Adrenal gland (tissue), 19 donors: ENCODE measurements at regions of chr4 and their contacts with region 1.

Region 1: DNA sequence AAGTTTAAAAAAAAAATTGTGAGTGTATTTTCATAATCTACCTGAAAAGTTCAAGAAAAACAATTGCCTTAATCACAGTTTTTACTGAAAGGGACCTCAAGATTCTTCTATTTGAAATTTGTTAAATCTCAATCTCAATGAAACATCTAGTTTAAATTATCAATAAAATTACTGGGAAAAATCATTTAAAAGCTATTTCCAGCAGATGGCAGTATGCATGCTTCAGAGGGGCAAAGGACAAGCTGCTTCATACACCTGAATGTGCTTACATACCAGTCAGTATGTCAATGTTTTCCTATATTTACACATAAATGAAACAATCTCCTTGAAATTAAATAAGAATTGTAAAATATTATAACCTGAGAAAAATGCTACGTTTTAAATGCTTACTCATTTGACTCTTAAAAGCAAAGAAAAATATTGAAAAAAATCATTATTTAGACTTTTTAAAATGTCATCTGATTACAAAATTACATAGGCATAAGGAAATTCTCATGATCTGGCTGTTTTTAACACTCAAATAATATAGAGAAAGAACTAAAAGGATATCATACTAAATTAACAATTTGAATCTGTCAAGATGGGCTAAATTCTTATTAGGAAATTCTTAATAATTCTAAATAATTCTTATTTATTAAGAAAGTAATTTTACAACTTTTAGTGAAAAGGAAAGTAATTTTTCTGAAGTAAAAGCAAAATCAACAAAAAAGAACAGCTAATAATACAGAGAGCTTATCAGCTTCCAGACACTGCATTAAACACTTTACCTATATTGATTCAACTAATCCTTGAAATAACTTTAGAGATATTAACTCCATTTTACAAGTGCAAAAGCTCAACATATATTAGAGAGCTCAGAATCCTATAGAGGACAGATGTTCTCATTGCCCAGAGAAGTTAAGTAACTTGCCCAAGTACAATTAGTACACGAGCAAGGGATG is 242.1 kb downstream of the ADAMTS3 start:
- DNase-seq: peak in 2 of 7 donors; percentile 5 to 15
- H3K4me3 ChIP-seq: no peak overlapping the region
- H3K27ac ChIP-seq: no peak overlapping the region
- H3K4me1 ChIP-seq: no peaks in the 10 kb centered on the region
- H3K27me3 ChIP-seq: no peaks in the 10 kb centered on the region
- CTCF ChIP-seq: peak; percentile 43 to 72 (median 55)
- POLR2A ChIP-seq: no peak

Region 2: DNA sequence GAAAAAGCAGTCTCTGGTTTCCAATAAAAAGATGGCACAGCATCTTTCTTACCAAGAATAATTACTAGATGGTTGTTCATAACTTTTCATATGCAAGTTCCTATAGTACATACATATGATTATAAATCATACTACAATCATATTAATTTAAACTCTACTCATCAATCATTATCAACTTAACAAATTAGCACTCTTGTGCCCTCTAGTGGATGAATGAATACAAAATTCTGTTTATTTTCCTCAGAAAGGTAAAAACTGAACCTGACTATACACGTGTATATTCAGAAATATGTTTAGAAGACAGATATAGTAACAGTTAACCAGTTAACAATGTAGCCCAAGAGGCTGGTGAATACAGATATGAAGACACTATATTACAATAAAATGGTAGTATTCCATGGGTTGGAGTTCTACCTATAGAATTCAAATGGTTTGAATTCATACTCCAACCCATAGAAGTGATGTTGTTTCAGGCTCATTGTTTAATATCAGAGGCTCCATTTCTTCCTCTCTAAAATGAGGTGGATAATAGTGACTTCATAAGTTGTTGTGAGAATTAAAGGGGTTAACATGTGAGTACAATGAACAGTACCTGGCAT is 142.0 kb after region 1 on chr4:
- intact Hi-C with region 1: loop called (anchors 2 to 5 kb)
- DNase-seq: no peak
- H3K4me3 ChIP-seq: no peak overlapping the region
- H3K27ac ChIP-seq: no peak overlapping the region
- H3K4me1 ChIP-seq: no peaks in the 10 kb centered on the region
- H3K27me3 ChIP-seq: no peaks in the 10 kb centered on the region
- CTCF ChIP-seq: peak; percentile 40 to 77 (median 56)
- POLR2A ChIP-seq: no peak